ENCODE measurements at regions of chr2 and their contacts with region 1.

Region 1: DNA sequence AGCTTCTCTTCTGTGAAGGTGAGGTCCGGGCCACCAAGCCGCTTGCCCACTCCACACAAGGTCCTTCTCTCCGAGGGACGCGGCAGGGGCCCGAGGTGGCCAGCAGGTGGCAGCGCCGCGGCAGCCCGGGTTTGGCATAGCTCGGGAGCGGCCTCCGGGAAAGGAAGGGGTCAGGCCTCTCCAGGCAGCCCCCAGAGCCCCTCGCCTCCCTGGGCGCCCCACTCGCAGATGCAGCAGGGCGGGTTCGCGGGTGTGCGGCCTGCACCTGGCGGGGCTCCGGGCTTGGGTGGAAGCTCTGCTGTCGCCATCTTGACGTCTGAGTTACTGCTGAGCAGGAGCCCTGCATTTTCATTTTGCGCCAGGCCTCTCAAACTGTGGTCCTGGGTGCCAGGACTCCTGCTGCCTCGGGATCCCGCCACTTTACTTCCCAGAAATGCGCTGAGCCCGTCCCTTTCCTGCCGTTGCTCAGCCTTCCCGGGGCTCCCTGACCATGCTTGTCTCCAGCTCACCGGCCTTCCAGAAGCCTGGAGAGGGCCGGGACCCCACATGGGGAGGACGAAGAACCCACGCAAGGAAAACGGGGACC is 18.6 kb upstream of the NCL start:
- DNase-seq: no peak
- H3K4me3 ChIP-seq: peak overlapping the region; percentile 41
- CTCF ChIP-seq: peak; percentile 95

Region 2: GRCh38 chr2:231497651-231498050 is 14.8 kb after region 1 on chr2:
- CTCF ChIA-PET with region 1: interaction called, 42 read pairs
- POLR2A ChIA-PET with region 1: no interaction called
- DNase-seq: no peak
- H3K4me3 ChIP-seq: no peak overlapping the region
- CTCF ChIP-seq: no peak

Region 3: GRCh38 chr2:231514103-231514950 is 31.4 kb after region 1 on chr2:
- CTCF ChIA-PET with region 1: interaction called, 19 read pairs
- POLR2A ChIA-PET with region 1: interaction called, 3 read pairs
- DNase-seq: peak; percentile 53
- H3K4me3 ChIP-seq: peak overlapping the region; percentile 89
- CTCF ChIP-seq: no peak

Region 4: GRCh38 chr2:231530091-231531011 is 47.5 kb after region 1 on chr2 and contains the start of gene NMUR1:
- CTCF ChIA-PET with region 1: interaction called, 27 read pairs
- POLR2A ChIA-PET with region 1: no interaction called
- DNase-seq: no peak
- H3K4me3 ChIP-seq: peak within 1 kb of the TSS; percentile 6; the same call in 1 of the 2 replicates
- CTCF ChIP-seq: peak; percentile 61

Region 5: DNA sequence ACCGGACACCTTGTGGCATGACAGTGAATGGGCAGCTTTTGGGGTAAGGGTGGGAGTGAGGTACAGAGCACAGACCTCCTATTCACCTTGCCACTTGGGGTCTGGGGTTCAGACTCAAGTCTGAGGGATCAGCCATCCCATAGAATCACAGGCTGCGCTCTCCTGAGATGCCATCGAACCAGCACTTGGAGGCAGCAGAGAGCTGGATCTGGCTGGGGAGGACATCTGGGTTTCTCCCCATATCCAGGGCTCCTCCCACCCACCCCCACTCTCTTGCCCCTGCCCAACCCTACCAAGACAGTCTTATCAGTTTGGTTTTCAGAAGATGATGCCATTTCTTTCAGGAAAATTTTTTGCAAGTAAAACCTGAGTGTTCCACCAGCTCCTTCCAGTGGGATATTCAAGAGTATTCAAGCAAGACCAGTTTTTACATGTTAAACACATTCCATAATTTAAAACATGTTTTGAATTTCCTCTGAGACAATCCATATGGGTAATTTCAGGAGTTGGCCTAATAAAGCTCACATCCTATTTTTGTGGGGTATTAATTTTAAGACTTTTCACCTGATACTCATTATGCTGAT is 80.6 kb after region 1 on chr2:
- CTCF ChIA-PET with region 1: interaction called, 127 read pairs
- POLR2A ChIA-PET with region 1: no interaction called
- DNase-seq: no peak
- H3K4me3 ChIP-seq: no peak overlapping the region
- CTCF ChIP-seq: peak; percentile 79

Region 6: GRCh38 chr2:231877533-231878456 is 394.9 kb after region 1 on chr2:
- CTCF ChIA-PET with region 1: no interaction called
- POLR2A ChIA-PET with region 1: no interaction called
- DNase-seq: no peak
- H3K4me3 ChIP-seq: no peak overlapping the region
- CTCF ChIP-seq: no peak

Measured in AG04449 (cell line).